Adrenal gland (tissue), 19 donors: ENCODE measurements at regions of chr18 and their contacts with region 1.

Region 1: DNA sequence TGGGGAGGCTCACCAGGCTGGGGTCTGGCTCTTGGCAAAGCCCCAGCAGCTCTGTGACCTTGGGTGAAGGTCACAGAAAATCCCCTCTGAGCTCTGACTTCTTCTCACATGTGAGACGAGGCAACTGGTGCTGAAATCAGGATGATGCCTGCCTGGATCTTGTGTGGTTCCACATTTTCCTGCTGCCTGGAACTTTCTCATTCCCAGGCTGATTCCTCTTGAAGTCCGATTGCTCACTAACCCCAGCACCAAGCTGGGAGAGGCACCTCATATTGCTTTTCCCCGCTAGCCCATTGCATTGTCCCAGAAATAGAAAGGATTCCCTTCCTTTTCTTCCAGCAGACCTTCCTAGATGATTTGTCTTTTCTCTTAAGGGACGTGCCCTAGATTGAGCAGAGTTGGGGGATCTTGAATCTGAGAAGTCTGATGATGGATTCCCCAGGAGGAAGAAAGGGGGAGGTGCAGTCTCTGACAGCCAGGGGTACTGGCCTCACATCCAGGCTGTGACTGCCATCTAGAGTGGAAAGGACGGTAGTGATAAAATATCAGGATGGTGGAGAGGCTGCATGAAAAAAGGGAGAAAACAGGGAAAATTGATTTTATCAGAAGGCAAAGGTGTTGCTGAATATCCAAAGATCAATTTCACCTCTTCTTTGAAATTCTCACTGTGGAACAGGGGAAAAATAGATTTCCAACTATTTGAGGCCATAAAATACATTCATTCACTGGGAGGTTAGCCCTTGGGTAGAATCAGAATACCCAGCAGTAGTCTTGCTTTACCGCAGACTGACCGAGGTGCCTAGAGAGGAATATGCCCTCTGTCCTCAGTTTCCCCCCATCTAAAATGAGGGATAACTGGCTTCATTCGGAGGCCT is 96.3 kb downstream of the FAM210A start:
- DNase-seq: peak; percentile 44 to 78 (median 57)
- H3K4me3 ChIP-seq: no peak overlapping the region
- H3K27ac ChIP-seq: peak overlapping the region in 2 of 5 donors; percentile 9 to 22
- H3K4me1 ChIP-seq: peaks cover 5 to 9% of the 10 kb centered on the region in 2 donors
- H3K27me3 ChIP-seq: no peaks in the 10 kb centered on the region
- CTCF ChIP-seq: peak; percentile 59 to 92 (median 83)
- POLR2A ChIP-seq: no peak

Region 2: GRCh38 chr18:13120983-13121441 is 509.1 kb before region 1 on chr18:
- intact Hi-C with region 1: loop called in 1 of 2 experiments (anchors 5 kb)
- DNase-seq: no peak
- H3K4me3 ChIP-seq: no peak overlapping the region
- H3K27ac ChIP-seq: no peak overlapping the region
- H3K4me1 ChIP-seq: no peaks in the 10 kb centered on the region
- H3K27me3 ChIP-seq: no peaks in the 10 kb centered on the region
- CTCF ChIP-seq: no peak
- POLR2A ChIP-seq: no peak

Region 3: GRCh38 chr18:13207294-13207693 is 422.8 kb before region 1 on chr18:
- intact Hi-C with region 1: loop called (anchors 10 kb)
- DNase-seq: no peak
- H3K4me3 ChIP-seq: no peak overlapping the region
- H3K27ac ChIP-seq: no peak overlapping the region
- H3K4me1 ChIP-seq: no peaks in the 10 kb centered on the region
- H3K27me3 ChIP-seq: peaks cover 3% of the 10 kb centered on the region
- CTCF ChIP-seq: no peak
- POLR2A ChIP-seq: no peak

Region 4: DNA sequence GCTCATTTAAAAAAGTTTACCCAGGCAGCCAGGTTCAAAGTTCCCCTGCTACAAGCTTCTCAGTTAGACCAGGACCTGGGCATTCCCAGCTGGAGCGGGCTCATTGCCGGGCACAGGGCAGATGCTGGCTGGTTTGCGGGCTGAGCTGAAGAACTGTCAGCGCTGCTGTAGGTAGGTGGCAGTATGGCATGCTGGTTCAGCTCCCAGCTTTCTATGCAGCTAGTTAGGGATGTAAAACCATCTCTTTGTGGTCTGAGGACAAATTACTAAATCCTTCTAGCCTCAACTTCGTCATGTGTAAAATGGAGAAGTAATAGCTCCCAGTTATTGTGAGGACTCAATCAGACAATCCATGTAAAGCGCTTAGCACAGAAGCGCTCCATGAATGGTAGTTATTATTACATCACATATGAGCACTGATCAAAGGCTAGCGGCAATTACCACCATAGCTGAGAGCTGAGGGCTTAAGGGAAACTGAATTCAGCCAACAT is 413.9 kb before region 1 on chr18:
- intact Hi-C with region 1: loop called in 1 of 2 experiments (anchors 10 kb)
- DNase-seq: peak; percentile 73 to 90 (median 82)
- H3K4me3 ChIP-seq: peak overlapping the region in 1 of 4 donors; percentile 91
- H3K27ac ChIP-seq: peak overlapping the region in 3 of 5 donors; percentile 29 to 93 (median 90)
- H3K4me1 ChIP-seq: peaks cover 18 to 33% of the 10 kb centered on the region in 2 donors
- H3K27me3 ChIP-seq: peaks cover 3% of the 10 kb centered on the region
- CTCF ChIP-seq: peak; percentile 53 to 84 (median 80)
- POLR2A ChIP-seq: no peak

Region 5: GRCh38 chr18:13566941-13567746 is 62.9 kb before region 1 on chr18:
- intact Hi-C with region 1: loop called in 1 of 2 experiments (anchors 10 kb)
- DNase-seq: peak in 6 of 7 donors; percentile 55 to 76 (median 62)
- H3K4me3 ChIP-seq: no peak overlapping the region
- H3K27ac ChIP-seq: peak overlapping the region in 3 of 5 donors; percentile 60 to 84 (median 82)
- H3K4me1 ChIP-seq: peaks cover 0 to 9% of the 10 kb centered on the region in 2 donors
- H3K27me3 ChIP-seq: no peaks in the 10 kb centered on the region
- CTCF ChIP-seq: no peak
- POLR2A ChIP-seq: peak in 1 of 2 donors; percentile 20